ENCODE measurements at regions of chr12 and their contacts with region 1.

Region 1: GRCh38 chr12:949453-950191 is at the start of gene RAD52:
- DNase-seq: peak; percentile 94
- H3K4me3 Mint-ChIP-seq: peak within 1 kb of the TSS; percentile 95
- H3K27ac Mint-ChIP-seq: peak within 1 kb of the TSS; percentile 92
- H3K4me1 Mint-ChIP-seq: peaks cover 26% of the 10 kb centered on the region
- H3K27me3 Mint-ChIP-seq: peaks cover 6% of the 10 kb centered on the region
- total RNA-seq, gene RAD52: 15.4 and 17.4 TPM in 2 replicates

Region 2: DNA sequence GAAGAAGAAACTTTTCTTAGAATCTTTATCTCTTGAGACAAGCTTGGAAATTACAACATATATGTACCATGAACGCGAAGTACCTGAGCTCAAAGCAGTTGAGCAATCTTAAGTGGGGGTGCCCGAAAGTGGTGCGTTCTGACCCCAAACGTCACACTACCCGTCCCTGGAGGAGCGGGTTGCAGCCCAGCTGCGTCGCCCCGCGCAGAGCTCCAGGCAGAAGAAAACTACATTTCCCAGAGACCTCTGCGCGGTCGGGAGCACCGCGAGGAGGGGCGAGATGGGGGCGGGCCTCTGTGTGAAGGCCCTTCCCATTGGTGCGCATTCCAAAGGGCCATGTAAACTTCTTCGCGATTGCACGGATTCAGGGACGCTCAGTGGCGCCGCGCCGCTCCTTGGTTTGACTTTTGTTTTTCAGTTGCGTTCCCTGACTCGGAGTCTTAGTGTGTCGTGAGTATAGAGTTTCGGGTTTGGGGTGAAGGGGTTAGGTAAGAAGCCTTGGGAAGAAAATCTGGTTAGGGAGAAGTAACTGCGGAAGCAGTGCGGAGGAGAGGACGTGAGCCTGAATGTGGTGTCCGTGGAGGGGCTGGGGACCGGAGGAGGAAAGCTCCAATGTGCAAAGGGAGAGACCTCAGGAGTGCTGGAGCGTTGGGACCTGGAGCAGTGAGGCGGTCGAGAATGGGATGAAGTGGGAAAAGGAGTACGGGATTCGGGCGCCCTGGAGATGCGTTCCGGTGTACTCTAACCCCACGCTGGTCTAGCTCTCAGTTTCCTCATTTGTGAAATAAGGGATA is 548.2 kb before region 1 on chr12 and contains the start of gene CCDC77:
- intact Hi-C with region 1: loop called (anchors 1 kb)
- DNase-seq: peak; percentile 93
- H3K4me3 Mint-ChIP-seq: no peak within 1 kb of the TSS
- H3K27ac Mint-ChIP-seq: no peak within 1 kb of the TSS
- H3K4me1 Mint-ChIP-seq: no peaks in the 10 kb centered on the region
- H3K27me3 Mint-ChIP-seq: no peaks in the 10 kb centered on the region
- total RNA-seq, gene CCDC77: 12.6 and 14.6 TPM in 2 replicates

Region 3: DNA sequence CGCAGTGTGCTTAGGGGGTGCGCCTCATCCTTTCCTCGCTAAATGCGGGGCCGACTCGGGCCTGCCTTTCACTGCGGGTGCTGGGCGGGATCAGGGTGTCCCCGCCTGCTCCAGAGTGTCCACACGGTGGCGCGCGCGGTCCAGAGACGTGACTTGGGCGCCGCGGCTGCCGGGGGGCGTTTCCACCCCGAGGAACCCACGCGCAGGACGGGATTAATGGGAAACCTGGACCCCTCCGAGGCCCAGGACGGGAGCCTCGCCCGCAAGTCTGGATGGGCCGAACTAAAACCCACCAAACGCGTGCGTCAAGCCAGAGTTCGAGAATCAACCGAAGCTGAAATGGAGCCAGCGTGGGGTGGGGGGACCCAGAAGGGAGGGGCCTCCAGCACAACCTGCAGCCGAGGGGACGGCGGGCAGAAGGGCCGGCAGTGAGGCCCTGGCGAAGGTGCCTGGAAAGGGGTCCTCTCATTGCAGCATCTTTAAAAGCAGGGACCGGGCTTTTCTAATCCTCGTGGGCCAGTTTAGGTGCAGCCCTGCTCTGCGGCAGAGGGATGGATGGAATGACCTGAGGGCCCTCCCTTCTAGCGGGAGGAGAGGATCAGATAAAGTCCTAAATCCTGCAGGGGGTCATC is 379.7 kb before region 1 on chr12:
- intact Hi-C with region 1: loop called (anchors 1 kb)
- DNase-seq: peak; percentile 82
- H3K4me3 Mint-ChIP-seq: peak overlapping the region; percentile 79
- H3K27ac Mint-ChIP-seq: peak overlapping the region; percentile 36
- H3K4me1 Mint-ChIP-seq: peaks cover 44% of the 10 kb centered on the region
- H3K27me3 Mint-ChIP-seq: no peaks in the 10 kb centered on the region

Region 4: GRCh38 chr12:662566-663292 is 286.9 kb before region 1 on chr12:
- intact Hi-C with region 1: loop called (anchors 5 kb)
- DNase-seq: no peak
- H3K4me3 Mint-ChIP-seq: peak overlapping the region; percentile 69
- H3K27ac Mint-ChIP-seq: peak overlapping the region; percentile 78
- H3K4me1 Mint-ChIP-seq: peaks cover 56% of the 10 kb centered on the region
- H3K27me3 Mint-ChIP-seq: no peaks in the 10 kb centered on the region

Region 5: DNA sequence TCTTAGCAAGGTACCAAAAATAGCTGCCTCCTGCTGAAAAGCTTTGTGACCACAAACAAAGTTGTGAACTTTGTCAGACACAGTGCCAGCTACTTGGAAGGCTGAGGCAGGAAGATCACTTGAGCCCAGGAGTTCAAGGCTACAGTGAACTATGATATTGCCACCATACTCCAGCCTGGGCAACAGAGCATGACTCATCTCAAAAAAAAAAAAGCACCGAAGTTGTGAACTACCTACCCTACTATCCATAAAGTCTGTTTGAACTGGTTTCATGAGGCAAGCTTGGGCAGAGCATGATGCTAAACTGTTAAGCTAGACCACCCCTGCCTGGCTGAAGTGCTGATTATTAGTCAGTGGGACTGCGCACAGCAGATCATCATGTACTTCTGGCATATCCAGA is 75.7 kb before region 1 on chr12:
- intact Hi-C with region 1: loop called (anchors 5 kb)
- DNase-seq: no peak
- H3K4me3 Mint-ChIP-seq: no peak overlapping the region
- H3K27ac Mint-ChIP-seq: no peak overlapping the region
- H3K4me1 Mint-ChIP-seq: peaks cover 13% of the 10 kb centered on the region
- H3K27me3 Mint-ChIP-seq: no peaks in the 10 kb centered on the region

Region 6: DNA sequence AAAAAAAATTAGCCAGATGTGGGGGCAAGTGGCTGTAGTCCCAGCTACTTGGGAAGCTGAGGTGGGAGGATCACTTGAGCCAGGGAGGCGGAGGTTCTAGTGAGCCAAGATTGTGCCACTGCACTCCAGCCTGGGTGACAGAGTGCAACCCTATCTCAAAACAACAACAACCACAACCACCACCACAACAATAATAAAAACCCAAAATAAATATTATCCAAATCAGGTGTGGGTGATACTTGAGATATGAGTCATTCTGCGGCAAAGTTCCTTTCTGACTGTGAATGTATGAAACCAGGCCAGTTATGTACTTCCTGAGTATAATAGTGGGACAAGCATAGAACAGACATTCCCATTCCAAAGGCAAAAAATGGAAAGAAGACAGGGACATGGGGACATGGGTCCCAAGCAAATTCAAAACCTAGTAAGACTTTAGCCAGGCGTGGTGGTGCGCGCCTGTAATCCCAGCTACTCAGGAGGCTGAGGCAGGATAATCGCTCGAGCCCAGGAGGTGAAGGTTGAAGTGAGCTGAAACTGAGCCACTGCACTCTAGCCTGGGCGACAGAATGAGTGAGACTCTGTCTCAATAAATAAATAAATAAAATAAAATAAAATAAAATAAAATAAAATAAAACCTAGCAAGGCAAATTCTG is 31.7 kb after region 1 on chr12:
- intact Hi-C with region 1: no loop called
- DNase-seq: no peak
- H3K4me3 Mint-ChIP-seq: no peak overlapping the region
- H3K27ac Mint-ChIP-seq: no peak overlapping the region
- H3K4me1 Mint-ChIP-seq: peaks cover 14% of the 10 kb centered on the region
- H3K27me3 Mint-ChIP-seq: peaks cover 8% of the 10 kb centered on the region

Region 7: DNA sequence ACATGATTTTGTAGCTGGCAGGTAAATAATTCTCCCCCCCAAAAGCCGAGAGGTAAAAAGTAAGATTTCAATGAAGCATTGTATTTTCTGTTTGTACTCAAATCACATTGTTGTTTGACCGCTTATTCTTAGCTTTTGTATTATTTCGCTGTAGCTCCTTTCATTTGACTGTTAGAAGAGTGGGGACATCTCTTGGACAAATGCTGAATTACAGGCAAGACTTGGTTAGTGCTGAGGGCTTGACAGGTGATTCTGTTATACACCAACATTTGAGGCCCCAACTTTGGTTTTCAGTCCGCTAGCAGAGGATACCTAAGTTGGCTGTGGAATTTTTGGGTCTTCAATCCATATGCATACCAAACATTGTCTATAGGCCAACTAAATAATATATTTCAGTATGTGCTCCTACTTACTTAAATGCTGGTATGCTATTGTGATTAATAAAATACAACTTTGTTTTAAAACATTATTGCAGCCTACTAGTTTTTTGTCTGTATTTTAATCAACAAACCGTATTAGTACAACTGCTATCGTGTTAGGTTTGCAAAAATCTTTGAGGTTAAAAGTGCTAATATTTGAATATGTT is 143.6 kb after region 1 on chr12:
- intact Hi-C with region 1: loop called (anchors 5 kb)
- DNase-seq: peak; percentile 6
- H3K4me3 Mint-ChIP-seq: no peak overlapping the region
- H3K27ac Mint-ChIP-seq: no peak overlapping the region
- H3K4me1 Mint-ChIP-seq: peaks cover 12% of the 10 kb centered on the region
- H3K27me3 Mint-ChIP-seq: no peaks in the 10 kb centered on the region

Region 8: DNA sequence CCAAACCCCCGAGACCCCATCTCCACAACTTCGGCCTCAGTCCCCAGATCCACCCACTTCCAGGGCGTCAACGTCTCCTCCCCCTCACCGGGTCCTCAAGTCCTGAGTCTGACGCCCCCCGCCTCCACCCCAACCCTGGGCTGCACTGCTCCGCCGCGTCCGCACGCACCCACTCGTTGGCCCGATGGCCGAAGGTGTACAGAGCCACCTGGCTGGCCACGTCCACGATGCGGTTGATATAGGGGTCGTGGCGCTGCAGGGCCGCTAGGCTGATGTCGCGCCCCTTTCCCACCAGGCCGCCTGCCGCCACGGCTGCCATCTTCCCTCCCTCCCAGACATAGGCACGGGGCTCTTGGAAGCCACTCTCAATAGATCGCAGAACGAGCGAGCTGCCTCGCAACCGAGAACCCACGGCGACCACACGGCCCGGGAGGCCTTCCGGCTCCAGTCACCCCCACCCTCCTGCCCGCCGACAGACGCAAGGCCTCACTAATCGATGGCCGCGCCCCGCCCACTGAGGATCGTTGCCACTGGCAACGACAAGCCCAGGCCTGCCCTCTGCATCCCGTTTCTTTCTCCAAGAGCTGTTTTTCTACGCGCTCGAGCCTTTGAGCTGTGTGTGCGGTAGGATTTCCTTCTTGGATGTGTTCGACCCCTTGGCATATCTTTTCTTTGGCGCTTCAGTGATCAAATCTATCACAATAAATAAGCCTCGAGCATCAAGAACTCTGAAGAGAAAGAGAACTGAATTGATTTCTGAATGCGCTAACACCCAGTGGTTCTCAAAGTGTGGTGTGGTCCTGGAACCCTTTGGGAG is 1054.7 kb after region 1 on chr12 and contains the start of gene DCP1B:
- intact Hi-C with region 1: loop called (anchors 1 kb)
- DNase-seq: peak; percentile 93
- H3K4me3 Mint-ChIP-seq: peak within 1 kb of the TSS; percentile 97
- H3K27ac Mint-ChIP-seq: peak within 1 kb of the TSS; percentile 95
- H3K4me1 Mint-ChIP-seq: peaks cover 31% of the 10 kb centered on the region
- H3K27me3 Mint-ChIP-seq: peaks cover 3% of the 10 kb centered on the region
- total RNA-seq, gene DCP1B: 8.8 and 9.8 TPM in 2 replicates